ENCODE measurements at regions of chr10 and their contacts with region 1.

Region 1: DNA sequence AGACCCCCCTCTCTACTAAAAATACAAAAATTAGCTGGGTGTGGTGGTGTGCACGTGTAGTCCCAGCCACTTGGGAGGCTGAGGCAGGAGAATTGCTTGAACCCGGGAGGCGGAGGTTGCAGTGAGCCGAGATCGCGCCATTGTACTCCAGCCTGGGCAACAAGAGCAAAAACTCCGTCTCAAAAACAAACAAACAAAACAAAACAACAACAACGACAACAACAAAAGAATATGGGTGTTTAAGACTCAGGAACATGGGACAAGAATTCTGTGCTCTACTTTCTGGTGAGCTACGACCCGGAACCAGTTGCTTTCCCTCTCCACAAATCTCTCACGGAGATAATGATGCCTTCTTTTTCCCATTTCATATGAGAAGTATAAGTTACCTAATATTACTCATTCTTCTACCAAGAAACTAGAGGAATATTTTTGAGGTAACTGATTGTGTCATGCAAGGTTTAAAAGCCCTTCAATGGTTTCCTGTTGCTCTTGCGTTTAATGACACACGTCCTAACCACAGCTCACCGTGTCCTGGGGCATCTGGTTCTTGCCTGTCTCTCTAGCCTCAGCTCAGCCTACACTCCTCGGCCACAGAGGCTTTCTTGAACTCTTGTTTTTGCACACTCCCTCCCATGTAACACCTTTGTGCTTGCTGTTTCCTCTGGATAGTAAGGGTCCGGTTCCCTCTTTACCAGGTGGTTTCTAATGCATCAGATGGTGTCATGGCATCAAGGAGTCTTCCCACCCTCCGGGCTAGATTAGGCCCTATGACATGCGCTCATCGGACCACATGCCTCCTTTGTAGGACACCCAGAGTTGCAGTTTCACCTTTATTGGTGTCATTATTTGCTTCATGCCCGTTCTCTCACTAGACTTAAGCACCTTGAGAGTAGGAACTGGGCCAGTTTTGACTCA is 67.5 kb downstream of the PFKFB3 start:
- DNase-seq: peak in 8 of 9 donors; percentile 33 to 69 (median 52)
- ATAC-seq: peak; percentile 73
- H3K4me3 ChIP-seq: no peak overlapping the region
- H3K4me3 Mint-ChIP-seq: peak overlapping the region in 5 of 10 donors; percentile 8 to 72 (median 31)
- H3K27ac ChIP-seq: no peak overlapping the region
- H3K27ac Mint-ChIP-seq: peak overlapping the region; percentile 38 to 94 (median 85)
- H3K4me1 ChIP-seq: peaks cover 7 to 30% of the 10 kb centered on the region in 2 donors
- H3K4me1 Mint-ChIP-seq: peaks cover 23 to 63% (median 28%) of the 10 kb centered on the region in 7 donors
- H3K27me3 ChIP-seq: no peaks in the 10 kb centered on the region
- H3K27me3 Mint-ChIP-seq: no peaks in the 10 kb centered on the region

Region 2: DNA sequence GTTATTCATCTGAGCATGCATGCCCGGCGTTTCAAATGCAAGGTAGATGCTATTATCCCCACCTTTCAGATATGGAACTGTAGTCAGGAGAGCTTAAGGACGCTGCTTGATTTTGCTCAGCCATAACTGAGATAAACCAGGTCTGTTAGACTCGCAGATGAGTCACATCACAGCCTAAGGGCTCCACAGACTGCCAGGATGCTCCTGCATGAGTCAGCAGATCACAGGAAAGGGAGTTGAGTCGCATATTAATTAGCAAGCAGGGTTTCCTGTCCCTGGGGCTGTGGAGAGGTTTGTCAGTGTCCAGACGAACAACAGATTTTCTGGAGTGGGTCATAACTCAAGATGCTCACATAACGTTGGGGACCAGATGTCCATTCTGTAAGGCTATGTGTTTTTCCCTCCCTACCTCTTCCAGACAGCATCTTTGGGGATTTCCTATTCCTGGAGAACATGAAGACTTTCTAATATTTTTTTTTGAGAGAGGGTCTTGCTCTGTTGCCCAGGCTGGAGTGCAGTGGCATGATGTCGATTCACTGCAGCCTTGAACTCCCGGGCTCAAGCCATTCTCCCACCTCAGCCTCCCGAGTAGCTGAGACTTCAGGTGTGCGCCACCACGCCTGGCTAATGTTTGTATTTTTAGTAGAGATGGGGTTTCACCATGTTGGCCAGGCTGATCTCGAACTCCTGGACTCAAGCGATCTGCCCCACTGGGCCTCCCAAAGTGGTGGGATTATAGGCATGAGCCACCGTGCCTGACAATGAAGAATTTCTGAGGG is 30.8 kb before region 1 on chr10:
- CTCF ChIA-PET with region 1: interaction called, 3 read pairs
- POLR2A ChIA-PET with region 1: no interaction called
- intact Hi-C with region 1: loop called in 1 of 2 experiments (anchors 2 kb)
- DNase-seq: peak in 1 of 9 donors; percentile 69
- ATAC-seq: peak; percentile 82
- H3K4me3 ChIP-seq: no peak overlapping the region
- H3K4me3 Mint-ChIP-seq: peak overlapping the region in 1 of 10 donors; percentile 43
- H3K27ac ChIP-seq: no peak overlapping the region
- H3K27ac Mint-ChIP-seq: peak overlapping the region in 4 of 9 donors; percentile 4 to 57 (median 40)
- H3K4me1 ChIP-seq: peaks cover 0 to 8% of the 10 kb centered on the region in 2 donors
- H3K4me1 Mint-ChIP-seq: peaks cover 0 to 41% (median 0%) of the 10 kb centered on the region in 7 donors
- H3K27me3 ChIP-seq: no peaks in the 10 kb centered on the region
- H3K27me3 Mint-ChIP-seq: no peaks in the 10 kb centered on the region

Measured in naive thymus-derived CD4-positive, alpha-beta T cell (primary cell).